ENCODE measurements at regions of chr14 and their contacts with region 1.

Region 1: GRCh38 chr14:102344485-102344884 is 18.2 kb downstream of the CINP start:
- DNase-seq: peak; percentile 25
- ATAC-seq: peak; percentile 27

Region 2: GRCh38 chr14:102154821-102155549 is 189.5 kb before region 1 on chr14:
- intact Hi-C with region 1: no loop called
- DNase-seq: no peak
- ATAC-seq: no peak

Region 3: DNA sequence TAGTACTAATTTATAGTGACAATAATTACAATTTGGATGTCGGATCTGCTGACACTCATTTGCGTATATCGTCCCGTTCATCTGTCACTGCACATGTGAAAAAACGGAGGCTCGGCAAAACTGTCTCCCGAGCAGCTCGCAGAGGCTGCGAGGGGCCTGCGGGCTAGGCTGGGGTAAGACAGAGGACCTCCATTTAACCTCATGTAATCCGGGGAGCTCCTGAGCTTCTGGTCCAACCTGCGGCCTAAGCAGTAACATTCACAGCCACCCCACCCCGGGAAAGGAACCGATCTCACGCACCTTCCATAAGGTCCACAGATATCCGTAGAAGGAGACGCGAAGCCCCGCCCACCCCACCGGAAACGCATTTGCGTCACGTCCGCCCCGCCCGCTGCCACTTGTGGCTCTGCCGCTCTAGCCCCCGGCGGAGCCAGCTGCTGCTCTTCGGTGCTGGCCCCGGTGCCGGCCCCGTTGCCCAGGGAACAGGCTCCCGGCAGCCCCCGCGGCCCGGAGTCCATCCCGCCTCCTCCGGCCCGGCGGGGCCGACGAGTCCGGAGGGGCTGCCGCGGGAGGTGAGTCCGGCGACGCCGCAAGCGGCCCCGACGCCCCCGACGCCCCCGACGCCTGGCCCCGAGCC is 18.2 kb after region 1 on chr14 and contains the starts of genes CINP and TECPR2:
- intact Hi-C with region 1: loop called (anchors 1 kb)
- DNase-seq: peak; percentile 99
- ATAC-seq: peak; percentile 100
- total RNA-seq, gene CINP: 28.1 TPM
- total RNA-seq, gene TECPR2: 36.1 TPM

Region 4: DNA sequence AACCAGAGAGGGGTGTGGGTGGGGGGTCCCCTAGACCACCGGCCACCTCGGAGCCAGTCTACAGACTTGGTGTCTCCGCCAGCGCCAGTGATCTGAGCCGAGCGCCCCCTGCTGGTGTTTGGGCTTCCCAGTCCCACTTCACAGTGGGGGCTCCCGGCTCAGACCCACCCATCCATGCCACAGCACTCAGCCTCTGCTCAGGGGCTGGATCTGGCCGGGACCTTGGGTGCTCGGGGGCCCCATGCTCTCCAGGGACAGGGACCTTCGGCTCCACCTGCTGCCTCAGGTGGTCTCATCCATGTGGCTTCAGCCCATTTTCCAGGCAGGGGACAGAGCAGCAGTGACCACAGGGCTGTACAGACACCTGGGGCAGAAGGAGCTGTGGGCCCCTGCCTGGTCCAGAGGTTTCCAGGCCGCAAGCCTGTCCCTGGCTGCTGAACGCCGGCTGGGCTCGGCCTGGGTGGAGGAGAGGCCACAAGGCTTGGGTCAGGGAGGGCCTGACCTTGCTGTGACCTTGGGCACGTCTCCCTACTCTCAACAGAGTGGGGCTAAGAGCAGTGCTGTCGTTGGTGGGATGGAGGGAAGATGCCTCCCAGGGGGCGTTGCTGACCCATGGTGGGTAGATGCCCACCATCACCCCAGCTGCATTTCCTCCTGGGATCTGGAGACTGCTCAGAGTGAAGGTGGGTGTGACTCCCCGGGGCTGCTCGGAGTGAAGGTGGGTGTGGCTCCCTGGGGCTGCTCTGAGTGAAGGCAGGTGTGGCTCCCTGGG is 1880.2 kb after region 1 on chr14:
- intact Hi-C with region 1: loop called (anchors 5 kb)
- DNase-seq: no peak
- ATAC-seq: no peak